ENCODE measurements at regions of chr19 and their contacts with region 1.

Region 1: GRCh38 chr19:3821857-3822364 is 35.7 kb upstream of the MATK start:
- DNase-seq: peak; percentile 94
- H3K4me3 ChIP-seq: peak overlapping the region in 1 of 2 experiments; percentile 48; a peak in 1 of 4 replicates
- H3K27ac ChIP-seq: no peak overlapping the region
- H3K4me1 ChIP-seq: no peaks in the 10 kb centered on the region; a peak in 1 of 4 replicates
- H3K27me3 ChIP-seq: peaks cover 5% of the 10 kb centered on the region; the same call in 1 of the 2 replicates
- CTCF ChIP-seq: peak; percentile 91
- EP300 ChIP-seq: no peak
- RAD21 ChIP-seq: peak; percentile 62

Region 2: GRCh38 chr19:3608750-3609322 is 213.1 kb before region 1 on chr19:
- CTCF ChIA-PET with region 1: no interaction called
- POLR2A ChIA-PET with region 1: no interaction called
- DNase-seq: no peak
- H3K4me3 ChIP-seq: no peak overlapping the region
- H3K27ac ChIP-seq: no peak overlapping the region
- H3K4me1 ChIP-seq: peaks cover 8 to 14% of the 10 kb centered on the region in 2 experiments; a peak in 1 of 4 replicates
- H3K27me3 ChIP-seq: no peaks in the 10 kb centered on the region
- CTCF ChIP-seq: no peak
- EP300 ChIP-seq: no peak
- RAD21 ChIP-seq: no peak

Region 3: DNA sequence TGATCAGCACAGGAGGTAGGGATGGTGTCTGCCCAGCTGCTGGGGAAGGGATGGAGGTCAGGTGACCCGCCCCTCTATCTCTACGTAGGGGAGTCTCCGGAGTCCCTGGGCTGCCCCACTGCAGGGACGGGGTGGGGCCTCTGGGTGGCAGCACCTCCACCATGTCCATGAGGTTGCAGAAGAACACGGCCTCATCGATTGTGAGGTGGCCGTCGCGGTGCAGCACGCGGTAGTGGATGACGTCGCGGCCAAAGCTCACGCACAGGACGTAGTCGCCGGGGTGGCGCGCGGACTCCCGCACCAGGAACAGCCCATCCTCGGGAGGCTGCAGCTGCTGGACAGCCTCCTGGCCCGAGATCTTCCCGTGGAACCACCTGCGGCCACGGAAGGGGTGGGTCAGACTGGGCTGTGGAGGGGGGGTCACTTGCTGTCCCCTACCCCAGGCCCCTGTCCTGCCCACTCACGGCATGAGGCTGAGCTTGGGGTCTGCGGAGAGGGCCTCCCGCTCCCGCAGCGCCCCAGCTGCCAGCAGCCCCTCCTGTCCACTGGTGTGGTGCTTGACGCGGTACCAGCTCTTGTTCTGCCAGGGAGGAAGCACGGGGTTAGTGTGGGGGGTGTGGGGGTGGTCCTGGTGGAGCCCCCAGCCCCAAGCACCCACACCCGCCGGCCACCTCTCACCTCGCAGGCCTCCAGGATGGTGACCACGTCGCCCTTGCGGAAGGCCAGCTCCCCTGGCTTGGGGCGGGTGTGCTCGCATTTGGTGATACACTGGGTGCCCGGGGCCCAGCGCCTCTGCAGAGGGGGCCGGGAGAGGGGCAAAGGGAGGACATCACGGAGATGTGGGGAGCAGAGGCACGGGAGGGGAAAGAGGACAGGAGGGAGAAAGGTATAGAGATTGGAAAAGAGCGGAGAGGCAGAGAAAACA is 38.0 kb before region 1 on chr19:
- CTCF ChIA-PET with region 1: interaction called, 26 read pairs
- POLR2A ChIA-PET with region 1: no interaction called
- DNase-seq: peak; percentile 88
- H3K4me3 ChIP-seq: no peak overlapping the region
- H3K27ac ChIP-seq: no peak overlapping the region
- H3K4me1 ChIP-seq: no peaks in the 10 kb centered on the region; a peak in 1 of 4 replicates
- H3K27me3 ChIP-seq: peaks cover 31% of the 10 kb centered on the region
- CTCF ChIP-seq: peak; percentile 34; the same call in 1 of the 2 replicates
- EP300 ChIP-seq: no peak
- RAD21 ChIP-seq: peak; percentile 63

Measured in SK-N-SH (cell line).